A549 (cell line): ENCODE measurements at regions of chr3 and their contacts with region 1.

Region 1: DNA sequence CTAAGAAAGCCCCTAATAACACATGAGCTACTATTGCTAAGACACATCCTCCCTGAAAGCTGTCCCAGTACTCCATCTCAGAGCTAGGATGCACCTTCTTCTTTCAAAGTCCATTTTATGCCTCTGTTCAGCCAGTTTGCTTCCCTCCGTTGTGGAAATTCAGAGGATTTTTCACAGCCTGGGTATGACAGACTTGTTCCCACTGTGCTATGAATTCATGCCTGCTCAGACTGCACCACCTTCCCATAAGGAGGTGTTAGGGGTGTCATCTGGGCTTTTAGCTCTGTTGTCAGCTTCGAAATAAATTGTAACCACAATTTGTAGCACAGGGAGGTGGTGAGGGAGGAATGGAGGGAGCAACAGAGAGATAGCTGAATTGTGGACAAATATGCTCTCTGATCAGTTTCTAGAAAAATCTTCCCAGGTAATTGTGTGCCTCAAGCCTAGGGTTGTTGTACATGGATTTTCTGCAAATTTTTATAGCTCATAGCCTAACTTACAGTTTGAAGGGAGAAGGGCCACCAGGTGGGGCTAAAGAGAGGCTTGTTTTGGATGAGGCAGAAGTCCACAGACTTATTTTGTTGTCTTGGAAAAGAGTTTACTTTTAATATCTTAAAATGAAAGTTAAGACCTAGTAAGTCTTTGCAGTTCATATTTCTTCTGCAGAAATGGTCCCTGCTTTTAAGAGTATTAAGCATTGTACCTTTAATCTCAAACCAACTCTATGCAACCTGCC is 462.0 kb downstream of the PDCD6IP start:
- DNase-seq: peak; percentile 44 to 54
- ATAC-seq: peak; percentile 81 to 90
- H3K4me3 ChIP-seq: no peak overlapping the region
- H3K27ac ChIP-seq: no peak overlapping the region
- H3K4me1 ChIP-seq: peaks cover 3% of the 10 kb centered on the region; the same call in 1 of the 3 replicates
- CTCF ChIP-seq: peak; percentile 62
- EP300 ChIP-seq: no peak
- POLR2A ChIP-seq: no peak
- RAD21 ChIP-seq: peak; percentile 51 to 61; a peak in 4 of 5 replicates

Region 2: DNA sequence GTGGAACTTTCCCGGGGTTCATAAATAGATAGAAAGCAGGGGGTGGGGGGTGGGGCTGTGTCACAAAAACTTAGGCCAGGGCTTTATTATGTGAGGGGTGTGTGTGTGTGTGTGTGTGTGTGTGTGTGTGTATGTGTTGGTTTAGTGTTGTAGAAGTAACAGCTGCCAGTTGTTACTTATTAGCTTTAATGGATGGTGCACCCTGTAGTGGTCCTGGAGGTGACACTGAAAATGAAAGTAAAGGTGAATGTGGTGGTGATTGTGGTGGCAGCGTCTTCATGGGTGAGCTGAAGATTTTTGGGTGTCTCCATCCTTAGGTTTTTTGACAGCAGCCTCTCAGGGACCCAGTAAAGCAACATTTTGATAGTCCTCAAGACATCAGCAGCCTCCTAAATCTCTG is 12.1 kb before region 1 on chr3:
- CTCF ChIA-PET with region 1: interaction called, 10 read pairs
- POLR2A ChIA-PET with region 1: no interaction called
- DNase-seq: no peak
- ATAC-seq: no peak
- H3K4me3 ChIP-seq: no peak overlapping the region
- H3K27ac ChIP-seq: no peak overlapping the region
- H3K4me1 ChIP-seq: no peaks in the 10 kb centered on the region
- CTCF ChIP-seq: no peak
- EP300 ChIP-seq: no peak
- POLR2A ChIP-seq: no peak
- RAD21 ChIP-seq: no peak

Region 3: GRCh38 chr3:34283751-34284150 is 23.3 kb after region 1 on chr3:
- CTCF ChIA-PET with region 1: no interaction called
- POLR2A ChIA-PET with region 1: no interaction called
- DNase-seq: no peak
- ATAC-seq: no peak
- H3K4me3 ChIP-seq: no peak overlapping the region
- H3K27ac ChIP-seq: no peak overlapping the region
- H3K4me1 ChIP-seq: no peaks in the 10 kb centered on the region
- CTCF ChIP-seq: no peak
- EP300 ChIP-seq: no peak
- POLR2A ChIP-seq: no peak
- RAD21 ChIP-seq: no peak

Region 4: DNA sequence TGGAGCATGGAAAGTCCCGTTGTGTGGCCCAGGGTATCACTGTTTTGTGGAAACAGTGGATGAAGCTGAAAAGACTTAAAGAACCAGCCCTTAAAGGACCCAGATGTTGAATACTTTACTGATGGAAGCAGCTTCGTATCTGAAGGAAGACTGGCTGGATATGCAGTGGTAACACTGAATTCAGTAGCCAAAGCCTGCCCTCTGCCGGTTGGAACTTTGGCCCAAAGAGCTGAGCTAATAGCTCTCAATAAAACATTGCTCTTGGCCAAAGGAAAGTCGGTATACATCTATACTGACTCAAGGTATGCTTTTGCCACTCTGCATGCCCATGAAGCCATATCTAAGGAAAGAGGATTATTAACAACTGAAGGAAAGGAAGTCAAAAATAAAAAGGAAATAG is 423.4 kb after region 1 on chr3:
- CTCF ChIA-PET with region 1: interaction called, 13 read pairs
- POLR2A ChIA-PET with region 1: no interaction called
- DNase-seq: peak; percentile 2 to 64
- ATAC-seq: peak; percentile 88 to 94
- H3K4me3 ChIP-seq: no peak overlapping the region
- H3K27ac ChIP-seq: no peak overlapping the region
- H3K4me1 ChIP-seq: no peaks in the 10 kb centered on the region
- CTCF ChIP-seq: peak; percentile 69
- EP300 ChIP-seq: no peak
- POLR2A ChIP-seq: no peak
- RAD21 ChIP-seq: peak; percentile 82 to 87